ENCODE measurements at regions of chr3 and their contacts with region 1.

Region 1: DNA sequence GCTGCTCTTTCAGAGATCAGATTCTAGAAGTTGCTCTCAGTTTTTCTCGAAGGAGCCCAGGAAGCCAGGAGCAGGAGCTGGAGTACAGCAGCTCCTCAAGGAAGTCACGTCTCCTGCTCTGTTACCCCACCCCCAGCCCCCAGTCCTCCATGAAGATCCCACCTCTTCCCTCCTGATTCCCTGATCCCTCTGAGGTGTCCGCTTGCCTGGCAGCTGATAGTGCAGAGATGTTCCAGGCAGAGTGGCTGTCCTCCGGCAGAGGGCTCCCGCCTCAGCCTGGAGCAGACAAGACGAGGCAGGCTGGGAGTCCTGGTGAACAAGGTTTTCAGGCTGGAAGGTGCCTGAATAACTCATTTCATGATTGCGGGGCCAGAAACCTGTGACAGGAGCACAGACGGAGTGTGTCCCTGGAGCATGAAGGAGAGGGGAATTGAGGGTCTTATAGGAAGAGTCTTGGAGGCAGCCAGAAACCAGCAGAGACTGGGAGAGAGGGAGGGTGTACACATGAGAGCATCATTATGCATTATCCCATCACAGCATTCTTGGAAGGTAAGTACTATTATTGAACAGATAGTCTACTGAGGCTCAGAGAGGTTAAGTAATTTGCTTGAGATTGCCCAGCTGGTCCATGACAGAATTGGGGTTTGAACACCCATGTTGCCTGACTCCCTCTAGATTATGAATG is 1.2 kb downstream of the HRH1 start:
- DNase-seq: peak; percentile 55 to 65
- ATAC-seq: peak; percentile 73 to 91 (median 88)
- H3K4me3 ChIP-seq: peak overlapping the region in 9 of 10 donors; percentile 26 to 62 (median 56)
- H3K27ac ChIP-seq: peak overlapping the region in 6 of 10 donors; percentile 11 to 59 (median 36)
- H3K4me1 ChIP-seq: peaks cover 0 to 32% (median 10%) of the 10 kb centered on the region in 9 donors
- H3K27me3 ChIP-seq: peaks cover 0 to 46% (median 27%) of the 10 kb centered on the region in 7 donors
- CTCF ChIP-seq: peak; percentile 34 to 81 (median 67)

Region 2: GRCh38 chr3:10933805-10934481 is 221.5 kb before region 1 on chr3:
- intact Hi-C with region 1: no loop called
- DNase-seq: no peak
- ATAC-seq: peak in 6 of 8 donors; percentile 40 to 64 (median 48)
- H3K4me3 ChIP-seq: no peak overlapping the region
- H3K27ac ChIP-seq: peak overlapping the region in 1 of 10 donors; percentile 4
- H3K4me1 ChIP-seq: peaks cover 0 to 3% (median 0%) of the 10 kb centered on the region in 9 donors
- H3K27me3 ChIP-seq: peaks cover 0 to 25% (median 7%) of the 10 kb centered on the region in 7 donors
- CTCF ChIP-seq: no peak

Region 3: DNA sequence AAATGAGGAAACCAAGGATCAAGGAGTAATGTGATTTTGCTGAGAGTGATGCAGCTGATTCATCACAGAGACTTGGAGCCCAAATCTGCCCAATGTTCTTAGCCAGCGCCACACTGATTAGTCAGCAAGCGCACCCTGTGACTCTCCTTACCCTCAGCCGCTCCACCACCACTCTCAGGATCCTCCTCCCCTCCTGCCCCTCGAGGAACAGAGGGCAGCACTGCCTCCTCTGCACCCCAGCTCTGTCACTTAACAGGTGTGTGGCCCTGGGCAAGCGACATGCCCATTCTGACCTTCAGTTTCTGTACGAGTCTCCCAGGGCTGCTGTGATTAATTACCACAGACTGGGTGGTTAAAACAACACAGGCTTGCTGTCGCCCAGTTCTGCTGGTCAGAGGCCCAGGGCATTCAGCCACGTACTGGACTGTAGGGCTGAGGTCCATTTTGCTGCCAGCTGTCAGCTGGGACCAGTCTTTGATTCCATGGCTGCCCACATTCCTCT is 37.3 kb before region 1 on chr3:
- intact Hi-C with region 1: no loop called
- DNase-seq: no peak
- ATAC-seq: no peak
- H3K4me3 ChIP-seq: no peak overlapping the region
- H3K27ac ChIP-seq: no peak overlapping the region
- H3K4me1 ChIP-seq: peaks cover 0 to 12% (median 0%) of the 10 kb centered on the region in 9 donors
- H3K27me3 ChIP-seq: peaks cover 0 to 26% (median 5%) of the 10 kb centered on the region in 7 donors
- CTCF ChIP-seq: no peak

Region 4: GRCh38 chr3:11185564-11186317 is 30.3 kb after region 1 on chr3:
- intact Hi-C with region 1: loop called in 2 of 10 experiments (anchors 5 kb)
- DNase-seq: peak; percentile 56 to 84
- ATAC-seq: peak; percentile 95 to 99 (median 97)
- H3K4me3 ChIP-seq: peak overlapping the region in 1 of 10 donors; percentile 11
- H3K27ac ChIP-seq: peak overlapping the region in 9 of 10 donors; percentile 15 to 73 (median 39)
- H3K4me1 ChIP-seq: peaks cover 3 to 29% (median 23%) of the 10 kb centered on the region in 9 donors
- H3K27me3 ChIP-seq: no peaks in the 10 kb centered on the region
- CTCF ChIP-seq: peak in 3 of 9 donors; percentile 11 to 20 (median 18)

Region 5: DNA sequence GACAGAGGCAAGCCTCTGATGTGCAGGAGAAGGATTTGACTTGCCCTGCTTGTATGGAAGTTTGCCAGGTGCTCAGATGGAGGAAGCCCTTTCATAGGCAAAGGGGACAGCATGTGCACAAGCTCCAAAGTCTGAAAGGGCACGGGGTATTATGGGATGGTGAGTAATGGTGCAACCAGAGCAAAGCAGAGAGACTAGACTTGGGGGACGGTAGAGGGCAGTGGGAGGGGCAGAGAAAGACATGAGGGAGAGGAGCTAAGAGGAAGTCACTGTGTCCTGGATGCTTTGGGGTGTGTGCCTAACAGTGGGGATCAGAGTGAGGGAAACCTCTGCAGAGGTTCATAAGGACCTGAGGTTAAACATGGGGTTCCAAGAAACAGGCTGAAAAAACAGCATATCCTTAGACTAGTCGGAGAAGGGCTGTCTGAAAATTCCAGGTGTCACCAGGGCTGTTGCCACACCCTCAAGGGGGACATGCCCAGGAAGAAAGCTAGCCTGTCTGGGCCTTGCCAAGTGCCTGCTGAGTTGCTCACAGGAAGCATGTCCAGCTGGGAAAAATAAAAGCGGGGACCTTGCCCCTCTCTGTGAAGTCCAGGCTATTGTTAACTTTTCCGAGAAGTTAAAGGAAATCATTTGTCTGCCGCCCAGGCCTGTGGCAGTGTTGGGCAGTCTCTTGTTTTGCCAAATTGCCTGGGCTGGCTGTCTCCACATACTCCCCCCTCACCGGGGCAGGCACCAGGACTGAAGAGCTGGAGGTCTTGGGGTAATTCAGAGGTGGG is 46.0 kb after region 1 on chr3:
- intact Hi-C with region 1: loop called in 5 of 10 experiments (anchors 1 to 5 kb)
- DNase-seq: peak in 1 of 2 donors; percentile 14
- ATAC-seq: peak; percentile 50 to 75 (median 69)
- H3K4me3 ChIP-seq: no peak overlapping the region
- H3K27ac ChIP-seq: peak overlapping the region in 5 of 10 donors; percentile 2 to 74 (median 56)
- H3K4me1 ChIP-seq: peaks cover 0 to 41% (median 12%) of the 10 kb centered on the region in 9 donors
- H3K27me3 ChIP-seq: peaks cover 0 to 6% (median 0%) of the 10 kb centered on the region in 7 donors
- CTCF ChIP-seq: no peak

Region 6: DNA sequence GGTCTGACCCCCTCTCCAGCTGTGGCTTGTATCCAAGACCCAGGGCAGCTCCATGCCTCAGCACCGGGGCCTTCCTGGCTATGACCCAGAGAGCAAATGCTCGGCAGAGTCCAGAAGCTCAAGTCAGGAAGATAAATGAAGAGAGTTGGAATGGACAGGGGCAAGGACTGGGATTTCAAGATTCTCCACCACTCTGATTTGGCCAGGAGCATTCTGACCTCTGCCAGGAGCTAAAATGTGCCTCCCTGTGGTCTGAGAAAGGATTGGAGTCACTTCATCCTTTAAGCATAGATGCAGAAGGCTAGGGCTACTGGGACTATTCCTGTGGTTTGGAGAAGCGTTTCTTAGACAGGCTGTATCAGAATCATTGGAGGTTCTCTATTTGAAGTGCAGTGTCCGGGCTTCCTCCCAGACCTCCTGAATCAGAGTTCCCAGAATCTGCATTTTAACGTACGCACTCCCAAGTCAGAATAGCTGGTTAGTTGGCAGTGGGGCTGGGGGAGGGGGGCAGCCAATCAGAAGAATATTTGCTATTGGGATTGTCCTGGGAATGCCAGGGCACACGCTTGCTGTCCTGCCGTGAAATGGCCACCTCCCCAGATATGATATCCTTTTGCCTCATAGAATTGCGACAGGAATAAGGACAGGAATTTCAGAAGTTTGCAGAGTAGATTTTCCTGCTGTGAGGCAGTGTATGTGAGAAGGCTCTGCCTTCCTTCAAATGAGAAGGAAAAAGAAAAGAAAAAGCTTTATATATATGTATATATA is 56.2 kb after region 1 on chr3:
- intact Hi-C with region 1: loop called in 4 of 10 experiments (anchors 5 kb)
- DNase-seq: no peak
- ATAC-seq: peak in 1 of 8 donors; percentile 16
- H3K4me3 ChIP-seq: no peak overlapping the region
- H3K27ac ChIP-seq: no peak overlapping the region
- H3K4me1 ChIP-seq: peaks cover 0 to 25% (median 0%) of the 10 kb centered on the region in 9 donors
- H3K27me3 ChIP-seq: peaks cover 0 to 7% (median 0%) of the 10 kb centered on the region in 7 donors
- CTCF ChIP-seq: peak in 1 of 9 donors; percentile 9

Region 7: DNA sequence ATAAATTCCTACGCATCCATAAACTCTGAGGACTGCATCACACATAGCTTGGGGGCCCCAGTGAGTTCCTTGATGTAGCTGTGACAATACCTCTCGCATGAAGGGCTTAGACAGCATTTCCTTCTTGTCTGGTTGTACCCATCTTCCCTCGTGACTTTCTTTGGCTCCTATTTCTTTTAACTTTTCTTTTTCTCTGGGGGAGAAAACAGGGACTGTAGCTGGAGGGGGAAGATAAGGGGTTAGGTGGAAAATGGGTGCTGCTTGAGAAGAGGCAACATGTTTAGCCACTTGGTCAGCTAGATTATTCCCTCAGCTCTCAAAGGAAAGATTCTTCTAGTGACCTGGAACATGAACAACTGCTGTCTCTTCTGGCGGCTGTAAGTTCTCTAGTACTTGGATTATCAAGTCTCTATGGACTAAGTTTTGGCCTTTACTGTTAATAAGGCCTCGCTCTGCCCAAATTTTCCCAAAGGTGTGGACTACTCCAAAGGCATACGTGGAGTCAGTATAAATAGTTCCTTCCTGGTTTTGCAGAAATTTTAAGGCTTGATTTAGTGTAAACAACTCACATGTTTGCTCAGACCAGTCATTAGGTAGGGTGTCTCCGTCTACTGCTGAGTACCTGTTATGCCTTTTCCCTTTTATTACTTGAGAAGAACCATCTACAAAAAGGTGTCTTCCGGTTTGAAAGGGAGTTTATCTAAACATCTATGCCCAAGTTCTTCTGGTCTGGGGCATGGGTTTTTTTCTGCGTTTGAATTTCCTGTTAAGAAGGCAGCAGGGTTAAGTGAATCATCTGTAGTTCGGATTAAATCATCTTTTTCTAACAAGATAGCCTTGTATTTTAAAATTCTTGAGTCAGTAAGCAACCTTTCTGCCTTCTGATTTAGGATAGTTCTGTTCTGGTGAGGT is 95.7 kb after region 1 on chr3:
- intact Hi-C with region 1: no loop called
- DNase-seq: no peak
- ATAC-seq: peak in 1 of 8 donors; percentile 46
- H3K4me3 ChIP-seq: no peak overlapping the region
- H3K27ac ChIP-seq: no peak overlapping the region
- H3K4me1 ChIP-seq: no peaks in the 10 kb centered on the region
- H3K27me3 ChIP-seq: no peaks in the 10 kb centered on the region
- CTCF ChIP-seq: no peak